Ovary (tissue), 10 donors: ENCODE measurements at regions of chr7 and their contacts with region 1.

Region 1: GRCh38 chr7:1225441-1226185 is 7.1 kb upstream of the UNCX start:
- DNase-seq: peak in 1 of 5 donors; percentile 52
- H3K4me3 ChIP-seq: no peak overlapping the region
- H3K27ac ChIP-seq: no peak overlapping the region
- H3K4me1 ChIP-seq: no peaks in the 10 kb centered on the region
- H3K27me3 ChIP-seq: peaks cover 12% of the 10 kb centered on the region
- CTCF ChIP-seq: peak in 2 of 3 donors; percentile 17 to 52
- EP300 ChIP-seq: no peak
- POLR2A ChIP-seq: no peak

Region 2: GRCh38 chr7:1432411-1433082 is 206.9 kb after region 1 on chr7:
- intact Hi-C with region 1: loop called in 1 of 4 experiments (anchors 10 kb)
- DNase-seq: peak; percentile 40 to 79 (median 77)
- H3K4me3 ChIP-seq: no peak overlapping the region
- H3K27ac ChIP-seq: no peak overlapping the region
- H3K4me1 ChIP-seq: no peaks in the 10 kb centered on the region
- H3K27me3 ChIP-seq: no peaks in the 10 kb centered on the region
- CTCF ChIP-seq: peak; percentile 61 to 94 (median 74)
- EP300 ChIP-seq: no peak
- POLR2A ChIP-seq: no peak

Region 3: DNA sequence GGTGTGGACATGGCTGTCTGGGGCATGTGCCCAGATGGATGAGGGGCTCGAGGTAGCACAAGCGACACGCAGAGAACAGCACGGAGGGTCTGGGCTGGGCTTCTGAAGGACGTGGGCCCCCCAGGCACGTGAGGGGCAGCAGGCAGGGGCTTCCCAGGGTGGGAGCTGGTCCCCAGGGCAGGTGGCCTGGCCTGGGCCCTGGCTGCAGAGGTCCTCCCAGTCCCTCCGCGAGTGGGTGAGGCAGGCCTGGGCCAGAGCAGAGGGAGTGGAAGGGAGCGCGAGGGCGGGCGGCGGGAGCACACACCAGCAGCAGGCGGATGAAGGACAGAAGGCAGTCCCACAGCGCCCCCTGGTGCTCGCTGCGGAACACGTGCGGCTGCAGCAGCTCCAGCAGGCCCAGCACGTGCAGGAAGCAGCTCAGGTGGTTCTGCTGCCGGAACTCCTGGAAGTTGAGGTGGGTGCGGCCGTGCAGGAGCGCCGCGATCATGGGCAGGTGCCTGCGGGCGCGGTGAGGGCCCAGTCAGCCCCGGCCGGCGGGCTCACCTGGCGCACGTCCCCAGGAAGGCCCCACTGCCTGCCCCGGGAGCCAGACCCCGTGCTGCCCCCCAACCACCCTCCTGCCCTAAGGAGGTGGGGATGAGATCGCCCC is 248.4 kb after region 1 on chr7:
- intact Hi-C with region 1: loop called in 3 of 4 experiments (anchors 5 to 10 kb)
- DNase-seq: peak; percentile 74 to 92 (median 85)
- H3K4me3 ChIP-seq: no peak overlapping the region
- H3K27ac ChIP-seq: no peak overlapping the region
- H3K4me1 ChIP-seq: no peaks in the 10 kb centered on the region
- H3K27me3 ChIP-seq: no peaks in the 10 kb centered on the region
- CTCF ChIP-seq: peak; percentile 79 to 82 (median 82)
- EP300 ChIP-seq: no peak
- POLR2A ChIP-seq: no peak

Region 4: DNA sequence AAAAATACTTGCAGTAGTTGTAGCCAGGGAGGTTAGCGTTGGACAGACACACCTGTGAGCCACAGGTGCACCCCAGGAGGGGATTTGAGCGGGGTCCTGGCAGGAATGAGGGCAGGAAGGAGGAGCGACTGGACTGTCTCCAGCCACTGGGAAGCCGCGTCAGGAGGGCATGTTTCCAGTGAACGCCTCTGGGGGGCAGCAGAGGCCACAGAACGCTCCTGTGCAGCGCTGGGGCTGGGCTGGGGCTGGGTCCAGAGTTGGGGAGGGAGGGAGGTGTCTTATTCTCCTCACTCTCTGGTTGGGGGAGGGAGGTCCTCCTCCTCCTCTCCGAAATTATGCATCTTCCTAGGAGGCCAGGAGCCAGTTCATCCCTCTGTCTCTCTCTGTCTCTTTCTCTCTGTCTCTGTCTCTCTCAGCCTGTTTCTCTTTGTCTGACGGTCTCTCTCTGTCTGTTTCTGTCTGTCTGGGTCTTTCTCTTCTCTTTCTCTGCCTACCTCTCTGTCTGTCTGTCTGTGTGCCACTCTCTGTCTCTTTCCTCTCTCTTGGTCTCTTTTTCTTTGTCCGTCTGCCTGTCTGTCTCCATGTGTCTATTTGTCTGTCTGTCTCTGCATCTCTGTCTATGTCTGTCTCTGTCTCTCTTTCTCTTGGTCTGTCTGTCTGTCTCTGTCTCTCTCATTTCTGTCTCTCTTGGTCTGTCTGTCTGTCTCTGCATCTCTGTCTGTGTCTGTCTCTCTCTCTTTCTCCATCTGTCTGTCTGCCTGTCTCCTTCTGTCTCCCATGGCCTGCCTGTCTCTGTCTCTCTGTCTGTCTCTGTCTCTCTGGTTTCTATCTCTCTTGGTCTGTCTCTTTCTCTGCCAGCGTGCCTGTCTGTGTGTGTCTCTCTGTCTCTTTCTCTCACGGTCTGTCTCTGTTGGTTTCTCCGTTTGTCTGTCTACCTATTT is 354.1 kb after region 1 on chr7:
- intact Hi-C with region 1: no loop called
- DNase-seq: peak; percentile 58 to 82 (median 80)
- H3K4me3 ChIP-seq: no peak overlapping the region
- H3K27ac ChIP-seq: no peak overlapping the region
- H3K4me1 ChIP-seq: no peaks in the 10 kb centered on the region
- H3K27me3 ChIP-seq: no peaks in the 10 kb centered on the region
- CTCF ChIP-seq: peak; percentile 52 to 72 (median 64)
- EP300 ChIP-seq: no peak
- POLR2A ChIP-seq: no peak